Psoas muscle (tissue), 8 donors: ENCODE measurements at regions of chr2 and their contacts with region 1.

Region 1: GRCh38 chr2:118221666-118222594 is 133.7 kb downstream of the INSIG2 start:
- DNase-seq: no peak
- ATAC-seq: peak; percentile 63 to 85 (median 83)
- H3K4me3 ChIP-seq: no peak overlapping the region
- H3K27ac ChIP-seq: no peak overlapping the region
- H3K4me1 ChIP-seq: peaks cover 11% of the 10 kb centered on the region
- H3K27me3 ChIP-seq: peaks cover 7 to 77% (median 15%) of the 10 kb centered on the region in 3 donors
- CTCF ChIP-seq: peak; percentile 68

Region 2: GRCh38 chr2:118122594-118123281 is 99.2 kb before region 1 on chr2:
- intact Hi-C with region 1: no loop called
- DNase-seq: no peak
- ATAC-seq: no peak
- H3K4me3 ChIP-seq: no peak overlapping the region
- H3K27ac ChIP-seq: no peak overlapping the region
- H3K4me1 ChIP-seq: no peaks in the 10 kb centered on the region
- H3K27me3 ChIP-seq: no peaks in the 10 kb centered on the region
- CTCF ChIP-seq: no peak

Region 3: DNA sequence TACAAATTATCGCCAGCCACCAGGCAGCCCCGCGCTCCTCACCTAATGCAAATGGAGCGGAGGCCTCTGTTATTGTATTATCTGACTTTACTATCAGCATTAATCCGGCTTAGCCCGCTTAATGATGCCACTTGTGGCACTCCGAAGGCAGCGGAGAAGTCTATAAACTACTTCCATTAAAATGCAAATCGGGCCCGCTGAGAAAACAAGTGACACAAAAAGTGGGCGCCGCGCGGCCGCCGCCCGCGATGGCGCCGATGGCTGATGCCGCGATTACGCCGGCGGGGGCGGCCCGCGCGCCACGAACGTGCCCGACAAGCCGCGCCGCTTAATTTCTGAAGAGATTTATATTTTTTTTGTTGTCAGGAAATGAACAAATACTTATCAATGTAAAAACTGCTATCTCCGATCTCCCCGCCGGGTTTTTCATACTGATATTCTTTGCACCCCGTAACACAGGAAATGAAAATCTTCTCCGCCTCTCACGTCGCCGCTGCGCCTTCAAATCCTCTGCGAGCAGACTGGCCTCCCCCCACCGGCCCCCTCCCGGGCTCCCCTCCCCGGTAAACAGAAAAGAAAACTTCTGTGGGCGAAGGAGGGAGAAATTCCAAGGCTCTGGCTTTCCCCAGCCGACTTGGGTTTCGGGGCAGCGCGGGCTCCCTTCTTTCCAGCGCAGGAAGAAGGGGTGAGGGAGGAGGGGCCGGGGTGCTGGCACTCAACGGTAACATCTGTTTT is 88.2 kb after region 1 on chr2:
- intact Hi-C with region 1: no loop called
- DNase-seq: peak in 1 of 2 donors; percentile 64
- ATAC-seq: peak; percentile 17 to 75 (median 58)
- H3K4me3 ChIP-seq: peak overlapping the region; percentile 68
- H3K27ac ChIP-seq: peak overlapping the region; percentile 34
- H3K4me1 ChIP-seq: peaks cover 3% of the 10 kb centered on the region
- H3K27me3 ChIP-seq: peaks cover 0 to 43% (median 4%) of the 10 kb centered on the region in 3 donors
- CTCF ChIP-seq: no peak

Region 4: DNA sequence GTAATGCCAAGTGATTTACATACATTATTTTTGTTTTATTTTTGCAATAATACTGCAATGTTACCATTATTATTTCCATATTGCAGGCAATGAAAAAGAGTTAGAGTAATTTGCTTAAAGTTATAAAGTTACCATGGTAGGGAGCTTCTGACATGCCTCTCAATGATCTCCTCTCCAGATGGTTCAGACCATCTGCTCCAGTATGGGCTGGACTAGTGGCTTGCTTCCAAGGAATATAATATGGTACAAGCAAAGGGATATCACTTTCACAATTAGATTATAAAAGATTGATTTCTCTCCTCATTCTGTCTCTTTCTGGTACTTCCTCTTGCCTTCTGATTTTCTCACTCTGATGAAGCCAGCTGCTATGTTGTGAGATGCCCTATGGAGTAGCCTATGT is 111.7 kb after region 1 on chr2:
- intact Hi-C with region 1: no loop called
- DNase-seq: no peak
- ATAC-seq: no peak
- H3K4me3 ChIP-seq: no peak overlapping the region
- H3K27ac ChIP-seq: no peak overlapping the region
- H3K4me1 ChIP-seq: no peaks in the 10 kb centered on the region
- H3K27me3 ChIP-seq: no peaks in the 10 kb centered on the region
- CTCF ChIP-seq: no peak

Region 5: GRCh38 chr2:118750959-118751565 is 529.1 kb after region 1 on chr2:
- intact Hi-C with region 1: loop called in 1 of 2 experiments (anchors 10 kb)
- DNase-seq: no peak
- ATAC-seq: peak in 1 of 4 donors; percentile 76
- H3K4me3 ChIP-seq: no peak overlapping the region
- H3K27ac ChIP-seq: no peak overlapping the region
- H3K4me1 ChIP-seq: no peaks in the 10 kb centered on the region
- H3K27me3 ChIP-seq: peaks cover 0 to 12% (median 4%) of the 10 kb centered on the region in 3 donors
- CTCF ChIP-seq: no peak

Region 6: GRCh38 chr2:118763797-118764196 is 541.9 kb after region 1 on chr2:
- intact Hi-C with region 1: loop called (anchors 5 to 10 kb)
- DNase-seq: no peak
- ATAC-seq: peak; percentile 81 to 98 (median 92)
- H3K4me3 ChIP-seq: no peak overlapping the region
- H3K27ac ChIP-seq: no peak overlapping the region
- H3K4me1 ChIP-seq: no peaks in the 10 kb centered on the region
- H3K27me3 ChIP-seq: no peaks in the 10 kb centered on the region
- CTCF ChIP-seq: peak; percentile 50

Region 7: DNA sequence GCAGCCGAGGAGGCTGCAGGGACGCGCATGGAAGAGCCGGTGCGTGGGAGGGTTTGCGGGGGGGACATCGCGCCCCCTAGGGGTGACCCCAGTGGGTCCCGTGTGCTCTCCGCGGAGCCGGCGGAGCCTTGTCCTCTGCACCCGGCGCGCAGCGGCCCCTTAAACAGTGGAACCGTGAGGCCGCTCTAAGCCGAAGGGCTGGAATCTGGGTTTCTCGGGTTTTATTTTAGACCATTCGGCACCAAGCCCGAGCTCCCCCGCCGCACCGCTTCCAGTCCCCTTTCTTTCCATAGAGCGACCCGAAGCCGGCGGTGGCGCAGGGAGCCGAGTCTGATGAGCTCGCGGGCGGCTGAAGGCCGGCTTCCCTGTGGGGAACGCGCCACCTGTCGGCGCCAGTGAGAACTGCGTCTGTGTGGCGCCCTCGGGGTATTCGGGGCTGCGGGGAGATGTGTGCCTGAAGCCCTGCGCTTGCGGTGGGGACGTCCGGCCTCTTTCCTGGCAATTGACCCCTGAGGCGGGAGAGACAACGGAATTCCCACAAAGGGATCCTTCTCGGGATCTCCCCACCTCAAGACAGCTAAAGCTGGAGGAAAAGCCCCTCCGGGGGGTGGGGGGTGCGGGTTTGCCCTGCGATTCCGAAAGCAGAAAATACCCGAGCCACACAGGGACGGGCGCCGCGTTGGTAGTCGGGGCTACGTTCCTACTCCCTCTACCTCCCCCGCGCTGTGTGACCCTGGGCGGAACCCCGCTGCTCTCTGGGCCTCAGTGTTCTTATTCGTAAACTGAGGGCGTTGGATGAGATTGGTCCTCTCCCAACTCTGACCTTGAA is 633.7 kb after region 1 on chr2:
- intact Hi-C with region 1: loop called in 1 of 2 experiments (anchors 5 kb)
- DNase-seq: peak; percentile 86 to 91
- ATAC-seq: peak; percentile 93 to 97 (median 96)
- H3K4me3 ChIP-seq: peak overlapping the region; percentile 58
- H3K27ac ChIP-seq: no peak overlapping the region
- H3K4me1 ChIP-seq: peaks cover 7% of the 10 kb centered on the region
- H3K27me3 ChIP-seq: peaks cover 0 to 93% (median 38%) of the 10 kb centered on the region in 3 donors
- CTCF ChIP-seq: peak; percentile 97

Region 8: GRCh38 chr2:118865106-118865505 is 643.2 kb after region 1 on chr2:
- intact Hi-C with region 1: loop called (anchors 2 to 5 kb)
- DNase-seq: no peak
- ATAC-seq: peak; percentile 78 to 97 (median 88)
- H3K4me3 ChIP-seq: no peak overlapping the region
- H3K27ac ChIP-seq: no peak overlapping the region
- H3K4me1 ChIP-seq: no peaks in the 10 kb centered on the region
- H3K27me3 ChIP-seq: peaks cover 0 to 14% (median 2%) of the 10 kb centered on the region in 3 donors
- CTCF ChIP-seq: peak; percentile 60